ENCODE measurements at regions of chr14 and their contacts with region 1.

Region 1: GRCh38 chr14:92748259-92749016 is at the start of gene LGMN:
- DNase-seq: peak; percentile 93
- CTCF ChIP-seq: no peak

Region 2: DNA sequence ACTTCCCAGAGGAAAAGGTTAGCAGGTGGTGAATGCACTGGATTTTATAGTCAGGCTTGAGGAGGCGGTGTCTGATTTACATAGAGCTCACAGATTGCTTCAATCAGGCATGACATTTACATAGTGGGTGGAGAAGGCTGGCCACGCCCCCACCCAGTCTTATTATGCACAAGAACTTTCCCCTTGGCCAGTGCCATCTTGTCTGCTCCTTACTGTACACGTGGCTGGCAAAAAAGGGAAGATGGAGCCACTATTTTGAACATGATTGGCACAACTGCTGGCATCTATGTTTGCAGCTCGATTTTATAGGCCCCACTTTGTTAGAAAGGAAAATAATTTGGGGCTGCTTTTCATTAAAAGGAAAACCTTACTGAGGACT is 10.9 kb after region 1 on chr14:
- CTCF ChIA-PET with region 1: interaction called, 12 read pairs
- POLR2A ChIA-PET with region 1: interaction called, 11 read pairs
- DNase-seq: no peak
- CTCF ChIP-seq: no peak

Region 3: DNA sequence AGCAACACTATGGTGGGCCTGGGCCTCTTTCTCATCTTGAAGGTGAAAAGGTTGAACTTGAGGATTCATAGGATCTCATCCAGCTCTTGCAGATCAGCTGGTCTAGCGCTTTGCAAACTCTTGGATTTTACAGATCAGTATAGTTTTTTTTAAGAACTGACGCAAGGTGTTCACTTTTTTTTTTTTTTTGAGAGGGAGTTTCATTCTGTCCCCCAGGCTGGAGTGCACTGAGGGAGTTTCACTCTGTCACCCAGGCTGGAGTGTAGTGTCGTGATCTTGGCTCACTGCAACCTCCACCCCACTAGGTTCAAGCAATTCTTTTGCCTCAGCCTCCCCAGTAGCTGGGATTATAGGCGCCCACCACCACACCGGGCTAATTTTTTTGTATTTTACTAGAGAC is 20.4 kb after region 1 on chr14:
- CTCF ChIA-PET with region 1: interaction called, 23 read pairs
- POLR2A ChIA-PET with region 1: interaction called, 23 read pairs
- DNase-seq: no peak
- CTCF ChIP-seq: no peak

Region 4: DNA sequence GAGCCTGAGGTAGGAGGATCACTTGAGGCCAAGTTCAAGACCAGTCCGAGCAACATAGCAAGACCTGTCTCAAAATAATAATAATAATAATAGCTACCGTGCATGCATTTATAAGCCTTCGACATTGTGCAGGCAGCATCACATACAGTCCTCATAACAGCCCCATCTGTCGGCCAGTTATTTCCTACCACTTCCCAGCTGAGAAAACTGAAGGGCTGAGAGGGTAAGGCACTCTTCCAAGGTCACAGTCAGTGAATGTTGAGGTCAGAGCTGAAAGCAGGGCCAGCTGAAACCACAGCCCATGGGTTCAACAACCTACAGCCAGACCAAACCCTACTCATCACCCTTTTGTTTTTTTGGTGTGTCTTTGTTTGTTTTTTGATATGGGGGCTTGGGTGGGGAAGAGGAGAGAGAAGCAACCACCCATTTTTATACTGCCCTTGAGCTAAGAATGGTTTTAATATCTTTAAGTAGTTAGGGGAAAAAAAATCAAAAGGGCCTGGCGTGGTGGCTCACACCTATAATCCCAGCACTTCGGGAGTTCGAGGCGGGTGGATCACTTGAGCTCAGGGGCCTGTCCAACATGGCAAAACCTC is 384.1 kb after region 1 on chr14:
- CTCF ChIA-PET with region 1: no interaction called
- POLR2A ChIA-PET with region 1: no interaction called
- DNase-seq: no peak
- CTCF ChIP-seq: peak; percentile 49